ENCODE measurements at regions of chr10 and their contacts with region 1.

Region 1: GRCh38 chr10:91774566-91774965 is 23.7 kb upstream of the TNKS2 start:
- DNase-seq: no peak
- CTCF ChIP-seq: no peak

Region 2: GRCh38 chr10:91758303-91759146 is 16.0 kb before region 1 on chr10:
- CTCF ChIA-PET with region 1: interaction called, 11 read pairs
- POLR2A ChIA-PET with region 1: no interaction called
- DNase-seq: peak; percentile 25
- CTCF ChIP-seq: peak; percentile 43

Measured in GM10248 (cell line).